PC-9 (cell line): ENCODE measurements at regions of chr11 and their contacts with region 1.

Region 1: DNA sequence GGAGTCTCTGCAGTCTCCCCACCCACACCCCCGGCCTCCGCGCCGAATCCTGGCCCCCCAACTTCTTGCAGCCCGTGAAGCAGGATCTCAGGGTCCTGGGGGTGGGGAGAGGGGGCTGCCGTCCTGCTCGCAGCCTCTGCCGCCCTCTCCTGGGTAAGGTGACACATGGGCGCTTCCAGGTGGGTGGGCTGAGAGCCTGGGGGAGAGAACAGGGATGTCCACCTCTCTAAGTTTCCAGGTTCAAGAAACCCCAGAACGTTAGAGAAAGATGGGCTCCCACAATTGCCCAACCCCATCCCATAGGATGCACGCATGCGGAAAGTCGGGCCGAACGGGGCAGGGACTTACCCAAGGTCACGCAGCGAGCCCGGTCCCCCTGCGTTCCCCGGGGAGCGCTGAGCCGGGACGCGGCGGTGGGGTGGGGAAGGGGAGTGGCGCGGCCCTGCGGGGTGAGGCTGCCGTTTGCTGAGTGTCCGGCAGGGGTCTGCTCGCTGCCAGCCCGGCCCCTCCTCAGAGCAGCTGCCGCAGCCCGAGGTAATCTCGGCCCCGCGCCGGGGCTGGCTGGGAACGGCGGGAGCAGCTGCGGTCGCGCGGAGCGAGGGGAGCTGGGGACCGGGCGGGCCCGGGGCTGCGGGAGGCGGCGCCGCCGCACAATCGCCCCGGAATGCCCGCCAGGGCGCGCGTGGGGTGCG is 705 bp upstream of the CAPN1 start:
- DNase-seq: peak; percentile 70 to 84
- H3K4me3 ChIP-seq: peak overlapping the region; percentile 97
- H3K27ac ChIP-seq: peak overlapping the region; percentile 44
- H3K4me1 ChIP-seq: peaks cover 32% of the 10 kb centered on the region
- H3K27me3 ChIP-seq: no peaks in the 10 kb centered on the region
- CTCF ChIP-seq: peak; percentile 77

Region 2: GRCh38 chr11:65013692-65014145 is 167.3 kb before region 1 on chr11:
- CTCF ChIA-PET with region 1: no interaction called
- POLR2A ChIA-PET with region 1: no interaction called
- intact Hi-C with region 1: loop called (anchors 1 kb)
- DNase-seq: peak in 1 of 2 experiments; percentile 80
- H3K4me3 ChIP-seq: peak overlapping the region; percentile 76
- H3K27ac ChIP-seq: peak overlapping the region; percentile 71
- H3K4me1 ChIP-seq: peaks cover 14% of the 10 kb centered on the region
- H3K27me3 ChIP-seq: no peaks in the 10 kb centered on the region
- CTCF ChIP-seq: peak; percentile 75

Region 3: GRCh38 chr11:65117216-65118096 is 63.6 kb before region 1 on chr11 and contains the start of gene ZNHIT2:
- CTCF ChIA-PET with region 1: interaction called, 5 read pairs
- POLR2A ChIA-PET with region 1: interaction called, 10 read pairs
- intact Hi-C with region 1: loop called (anchors 1 kb)
- DNase-seq: peak; percentile 96 to 100
- H3K4me3 ChIP-seq: peak within 1 kb of the TSS; percentile 100
- H3K27ac ChIP-seq: peak within 1 kb of the TSS; percentile 86
- H3K4me1 ChIP-seq: peaks cover 38% of the 10 kb centered on the region
- H3K27me3 ChIP-seq: no peaks in the 10 kb centered on the region
- CTCF ChIP-seq: peak; percentile 98
- total RNA-seq, gene ZNHIT2: 13.7 and 22.3 TPM in 2 replicates

Region 4: DNA sequence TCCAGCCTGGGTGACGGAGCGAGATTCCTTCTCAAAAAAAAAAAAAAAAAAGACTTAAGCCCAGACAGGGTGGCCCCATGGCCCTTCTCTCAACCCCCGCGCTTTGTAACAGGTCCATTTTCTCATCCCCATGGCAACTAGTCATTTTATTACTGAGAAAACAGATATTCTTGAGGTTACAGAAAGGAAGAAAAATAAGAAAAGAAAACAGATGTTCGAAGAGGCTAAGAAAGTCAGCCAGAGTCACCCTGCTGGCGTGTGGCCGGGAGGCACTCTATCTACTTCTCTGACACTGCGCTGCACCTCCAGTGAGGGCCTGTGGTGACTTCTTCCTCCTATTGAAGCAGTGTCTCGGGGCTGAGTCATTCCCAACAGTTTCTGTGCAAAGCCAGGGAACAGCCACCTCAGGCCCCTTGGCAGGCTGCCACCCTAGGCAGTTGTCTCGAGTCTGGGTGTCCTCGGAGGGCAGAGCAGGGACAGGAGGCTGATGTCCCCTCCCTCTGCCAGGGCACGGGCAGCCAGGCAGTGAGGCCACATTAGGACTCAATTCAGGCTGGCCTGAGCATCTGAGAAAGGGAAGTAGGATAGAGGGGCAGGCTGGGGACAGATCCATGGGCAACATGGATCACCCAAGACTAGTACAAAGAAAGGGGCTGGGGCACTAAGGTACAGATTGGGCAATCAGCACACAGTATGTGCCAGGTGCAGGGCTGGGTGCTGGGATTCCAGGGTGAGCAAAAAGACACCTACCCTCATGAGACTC is 30.3 kb before region 1 on chr11:
- CTCF ChIA-PET with region 1: no interaction called
- POLR2A ChIA-PET with region 1: no interaction called
- intact Hi-C with region 1: loop called (anchors 2 kb)
- DNase-seq: peak; percentile 99 to 100
- H3K4me3 ChIP-seq: peak overlapping the region; percentile 18; the same call in 1 of the 2 replicates
- H3K27ac ChIP-seq: peak overlapping the region; percentile 88
- H3K4me1 ChIP-seq: peaks cover 40% of the 10 kb centered on the region
- H3K27me3 ChIP-seq: no peaks in the 10 kb centered on the region
- CTCF ChIP-seq: no peak; the same call in 1 of the 2 replicates

Region 5: DNA sequence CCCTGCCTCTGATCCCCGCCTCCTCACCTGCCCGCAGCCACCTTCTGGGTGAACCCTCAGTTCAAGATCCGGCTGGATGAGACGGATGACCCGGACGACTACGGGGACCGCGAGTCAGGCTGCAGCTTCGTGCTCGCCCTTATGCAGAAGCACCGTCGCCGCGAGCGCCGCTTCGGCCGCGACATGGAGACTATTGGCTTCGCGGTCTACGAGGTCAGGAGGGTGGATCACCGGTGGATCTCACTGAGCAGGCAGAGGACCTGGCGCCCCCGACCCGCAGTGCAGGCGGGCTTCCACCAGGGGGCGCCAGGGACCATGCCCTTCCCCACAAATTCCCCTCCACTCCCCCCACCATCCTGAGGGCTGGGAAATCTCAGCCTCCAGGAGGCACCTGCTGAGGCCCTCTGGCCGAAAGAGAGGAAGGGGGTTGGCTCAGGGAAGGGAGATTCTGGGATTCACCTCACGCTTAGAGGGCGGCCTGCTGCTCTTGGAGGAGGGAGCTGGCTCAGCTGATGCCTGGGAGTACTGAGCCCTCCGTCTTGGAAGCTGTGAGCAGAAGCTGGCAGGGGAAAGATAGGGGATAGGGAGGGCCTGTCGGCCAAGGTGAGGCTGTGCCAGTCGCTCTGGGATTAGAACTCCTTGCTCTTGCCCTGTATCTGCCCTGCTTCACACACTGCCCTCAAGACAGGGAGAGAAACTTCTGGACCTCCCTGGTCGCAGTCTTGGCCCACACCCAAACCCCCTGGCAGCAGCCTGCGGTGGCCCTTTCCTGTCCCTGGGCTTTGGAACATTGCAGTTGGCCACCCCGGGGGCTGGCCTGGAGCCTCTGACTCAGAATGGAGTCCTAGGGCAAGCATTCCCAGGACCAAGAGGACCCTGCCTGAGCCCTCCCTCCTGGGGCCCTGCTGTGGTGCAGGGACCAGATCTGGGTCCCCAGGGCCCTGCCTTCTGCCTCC is 23.9 kb after region 1 on chr11:
- CTCF ChIA-PET with region 1: no interaction called
- POLR2A ChIA-PET with region 1: no interaction called
- intact Hi-C with region 1: loop called (anchors 1 kb)
- DNase-seq: peak in 1 of 2 experiments; percentile 57
- H3K4me3 ChIP-seq: no peak overlapping the region
- H3K27ac ChIP-seq: peak overlapping the region; percentile 72
- H3K4me1 ChIP-seq: peaks cover 70% of the 10 kb centered on the region
- H3K27me3 ChIP-seq: no peaks in the 10 kb centered on the region
- CTCF ChIP-seq: peak; percentile 99